ENCODE measurements at regions of chr20 and their contacts with region 1.

Region 1: DNA sequence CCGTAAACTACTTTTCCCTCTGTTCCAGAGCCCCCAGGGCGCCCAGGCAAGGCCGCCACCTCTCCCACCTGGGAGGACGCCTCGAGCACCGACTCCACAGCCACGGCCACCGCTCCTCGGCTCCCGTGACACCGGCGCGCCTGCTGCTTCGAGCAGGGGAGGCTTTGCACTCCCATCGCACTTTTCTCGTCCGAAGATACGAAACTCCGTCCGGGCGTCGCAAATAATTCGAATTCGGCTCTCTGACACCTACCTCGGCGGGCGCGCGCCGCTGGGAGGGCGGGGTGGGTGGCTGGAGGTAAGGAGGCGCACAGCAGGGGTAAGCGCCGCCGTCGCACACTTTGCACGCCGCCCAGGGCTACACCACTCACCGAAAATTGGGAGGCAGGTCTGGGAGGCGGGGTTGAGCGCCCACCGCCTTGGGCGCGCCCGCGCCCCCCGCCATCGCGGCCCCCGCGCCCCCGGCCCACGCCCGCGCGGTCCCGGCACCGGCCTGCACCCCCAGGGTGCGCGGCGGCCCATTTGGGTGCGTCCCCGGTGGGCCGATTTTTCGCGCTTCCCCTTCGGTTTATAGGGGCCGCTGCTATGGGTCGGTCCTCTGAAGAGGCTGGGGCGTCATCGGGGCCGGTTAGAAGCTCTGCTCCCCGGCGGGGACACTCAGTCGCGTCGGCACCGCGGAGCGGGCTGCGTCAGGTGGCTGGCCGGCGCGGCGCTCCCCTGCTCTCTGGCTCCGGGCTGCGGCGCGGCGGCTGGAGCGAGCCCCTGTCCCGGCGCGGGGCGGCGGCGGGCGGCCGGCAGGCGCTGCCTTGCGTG is 36.2 kb downstream of the GNAS start:
- DNase-seq: peak; percentile 70 to 89
- H3K4me3 ChIP-seq: peak overlapping the region; percentile 91 to 97
- H3K27ac ChIP-seq: peak overlapping the region; percentile 100
- H3K4me1 ChIP-seq: peaks cover 0 to 17% (median 9%) of the 10 kb centered on the region in 4 donors
- H3K27me3 ChIP-seq: no peaks in the 10 kb centered on the region
- CTCF ChIP-seq: no peak

Region 2: DNA sequence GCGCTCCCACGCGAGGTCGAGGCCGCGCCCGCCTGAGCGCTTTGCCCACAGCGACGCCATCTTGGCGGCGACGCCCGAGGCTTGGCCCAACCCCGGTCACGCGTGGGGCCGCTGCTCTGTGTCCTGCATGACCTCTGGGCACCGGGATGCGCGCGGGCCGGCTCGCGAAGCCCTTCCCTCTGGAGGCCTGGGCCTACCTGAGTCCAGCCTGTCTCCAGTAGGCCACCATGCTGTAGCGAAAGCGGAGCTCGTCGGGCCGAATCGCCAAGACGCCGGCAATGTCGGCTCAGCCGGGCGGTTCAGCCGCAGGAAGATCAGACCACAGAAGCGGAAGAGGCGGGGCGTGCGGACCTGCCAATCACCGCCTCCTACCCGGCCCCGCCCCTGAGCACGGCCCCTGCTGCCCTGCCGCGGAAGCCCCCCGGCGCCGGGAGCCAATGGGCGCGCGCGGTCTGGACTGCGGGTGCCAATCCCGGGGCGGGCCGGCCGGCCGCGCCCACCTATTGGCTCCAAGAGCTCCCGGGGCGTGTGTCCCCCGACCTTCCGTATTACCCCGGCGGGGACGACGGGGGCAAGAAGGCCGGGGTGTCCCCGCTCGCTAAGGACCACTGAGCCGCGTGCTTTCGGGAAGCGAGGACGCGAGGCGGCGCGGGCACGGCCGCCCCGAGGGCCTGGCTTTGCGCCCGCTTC is 143.4 kb after region 1 on chr20 and contains the start of gene ATP5F1E:
- intact Hi-C with region 1: loop called (anchors 5 kb)
- DNase-seq: peak; percentile 96 to 98
- H3K4me3 ChIP-seq: peak within 1 kb of the TSS; percentile 78 to 93
- H3K27ac ChIP-seq: peak within 1 kb of the TSS; percentile 85 to 86
- H3K4me1 ChIP-seq: peaks cover 0 to 44% (median 36%) of the 10 kb centered on the region in 4 donors
- H3K27me3 ChIP-seq: no peaks in the 10 kb centered on the region
- CTCF ChIP-seq: no peak

Measured in tibial artery (tissue), 4 donors.